ENCODE measurements at regions of chr2 and their contacts with region 1.

Region 1: DNA sequence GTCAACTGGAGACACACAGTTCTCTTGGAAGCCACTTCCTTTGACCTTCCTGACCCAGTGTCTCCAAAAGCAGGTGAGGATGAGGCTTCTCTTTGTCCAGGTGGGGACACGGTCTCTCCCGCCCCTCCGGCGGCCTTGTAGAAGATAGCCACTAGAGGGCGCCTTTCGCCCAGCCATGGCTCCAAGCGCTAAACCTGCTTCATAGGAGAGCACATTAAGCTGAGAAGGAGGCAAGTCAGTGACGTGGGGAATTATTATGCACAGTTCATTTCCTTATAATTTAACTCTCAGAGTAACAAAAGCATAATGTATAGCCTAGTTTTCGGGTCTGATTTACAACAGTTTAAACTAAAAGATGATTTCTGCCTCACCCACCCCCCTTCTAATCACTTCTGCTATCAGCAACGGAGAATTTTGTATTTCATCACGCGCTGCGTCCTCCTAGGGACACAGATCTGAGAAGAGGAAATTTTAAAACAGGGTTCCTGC is 208.7 kb downstream of the ICOS start:
- DNase-seq: peak; percentile 56 to 92
- H3K4me3 ChIP-seq: no peak overlapping the region; a peak in 1 of 8 replicates
- H3K27ac ChIP-seq: no peak overlapping the region
- H3K4me1 ChIP-seq: no peaks in the 10 kb centered on the region
- H3K27me3 ChIP-seq: no peaks in the 10 kb centered on the region
- CTCF ChIP-seq: peak; percentile 86 to 90 (median 89)
- EP300 ChIP-seq: no peak
- POLR2A ChIP-seq: no peak
- RAD21 ChIP-seq: peak; percentile 96 to 98

Region 2: GRCh38 chr2:204108330-204108751 is 37.0 kb before region 1 on chr2:
- CTCF ChIA-PET with region 1: interaction called, 14 read pairs
- POLR2A ChIA-PET with region 1: no interaction called
- DNase-seq: no peak
- H3K4me3 ChIP-seq: no peak overlapping the region
- H3K27ac ChIP-seq: no peak overlapping the region
- H3K4me1 ChIP-seq: peaks cover 0 to 5% (median 0%) of the 10 kb centered on the region in 4 experiments; a peak in 3 of 7 replicates
- H3K27me3 ChIP-seq: no peaks in the 10 kb centered on the region
- CTCF ChIP-seq: peak; percentile 46 to 59 (median 58)
- EP300 ChIP-seq: no peak
- POLR2A ChIP-seq: no peak
- RAD21 ChIP-seq: peak; percentile 78 to 82

Region 3: DNA sequence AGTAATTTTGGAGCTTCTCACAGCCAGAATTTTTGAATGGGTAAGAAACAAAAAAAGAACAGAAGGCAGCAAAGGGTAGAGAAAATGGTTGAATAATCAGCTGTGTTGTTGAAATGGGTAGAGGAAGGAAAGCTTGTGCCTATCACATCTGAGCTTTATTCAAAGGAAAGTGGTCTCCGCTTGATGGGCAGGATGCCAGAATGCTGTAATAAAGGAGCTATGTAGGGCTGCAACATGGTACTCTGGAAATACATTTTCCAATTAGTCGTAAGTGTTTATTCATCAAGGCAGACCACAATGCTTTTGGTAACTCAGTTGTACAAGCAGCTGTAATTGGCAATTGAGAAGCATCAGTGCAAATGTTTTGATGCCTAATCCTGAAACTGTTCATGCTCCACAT is 11.8 kb before region 1 on chr2:
- CTCF ChIA-PET with region 1: interaction called, 13 read pairs
- POLR2A ChIA-PET with region 1: no interaction called
- DNase-seq: peak in 1 of 2 experiments; percentile 14
- H3K4me3 ChIP-seq: no peak overlapping the region
- H3K27ac ChIP-seq: no peak overlapping the region
- H3K4me1 ChIP-seq: peaks cover 0 to 4% (median 0%) of the 10 kb centered on the region in 4 experiments; a peak in 1 of 7 replicates
- H3K27me3 ChIP-seq: no peaks in the 10 kb centered on the region
- CTCF ChIP-seq: no peak
- EP300 ChIP-seq: no peak
- POLR2A ChIP-seq: no peak
- RAD21 ChIP-seq: no peak